ENCODE measurements at regions of chr2 and their contacts with region 1.

Region 1: GRCh38 chr2:168490015-168490874 is 34.2 kb downstream of the CERS6 start:
- DNase-seq: peak; percentile 36
- ATAC-seq: peak; percentile 69
- H3K4me3 ChIP-seq: peak overlapping the region in 4 of 5 experiments; percentile 19 to 43 (median 29)
- H3K4me3 Mint-ChIP-seq: peak overlapping the region; percentile 60
- H3K27ac ChIP-seq: peak overlapping the region; percentile 7 to 37
- H3K27ac Mint-ChIP-seq: peak overlapping the region; percentile 26
- H3K4me1 ChIP-seq: peaks cover 14 to 16% of the 10 kb centered on the region in 2 donors
- H3K4me1 Mint-ChIP-seq: peaks cover 18% of the 10 kb centered on the region
- H3K27me3 ChIP-seq: no peaks in the 10 kb centered on the region
- H3K27me3 Mint-ChIP-seq: no peaks in the 10 kb centered on the region
- CTCF ChIP-seq: no peak

Region 2: GRCh38 chr2:168552450-168552856 is 62.2 kb after region 1 on chr2:
- CTCF ChIA-PET with region 1: no interaction called
- POLR2A ChIA-PET with region 1: no interaction called
- intact Hi-C with region 1: loop called (anchors 10 kb)
- DNase-seq: peak; percentile 54
- ATAC-seq: peak; percentile 77
- H3K4me3 ChIP-seq: no peak overlapping the region
- H3K4me3 Mint-ChIP-seq: no peak overlapping the region
- H3K27ac ChIP-seq: no peak overlapping the region
- H3K27ac Mint-ChIP-seq: peak overlapping the region; percentile 34
- H3K4me1 ChIP-seq: peaks cover 7 to 12% of the 10 kb centered on the region in 2 donors
- H3K4me1 Mint-ChIP-seq: peaks cover 18% of the 10 kb centered on the region
- H3K27me3 ChIP-seq: no peaks in the 10 kb centered on the region
- H3K27me3 Mint-ChIP-seq: no peaks in the 10 kb centered on the region
- CTCF ChIP-seq: no peak

Measured in B cell (primary cell).